ENCODE measurements at regions of chr18 and their contacts with region 1.

Region 1: DNA sequence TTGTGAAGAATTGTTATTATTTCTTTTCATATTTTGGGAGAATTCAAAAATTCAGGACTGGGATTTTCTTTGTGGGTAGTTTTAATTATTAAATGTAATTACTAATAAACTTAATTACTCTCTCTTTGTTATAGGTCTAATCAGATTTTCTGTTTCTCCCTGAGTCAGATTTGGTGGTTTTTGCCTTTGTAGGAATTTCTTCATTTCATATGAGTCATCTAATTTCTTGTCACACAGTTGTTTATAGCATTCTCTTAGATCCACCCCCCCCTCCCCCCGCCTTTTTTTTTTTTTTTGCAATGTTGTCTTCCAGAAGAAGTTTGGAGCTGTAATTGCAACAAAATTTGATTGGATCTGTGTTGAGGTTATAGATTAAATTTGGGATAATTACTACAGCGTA is 26.0 kb upstream of the GALR1 start:
- DNase-seq: no peak
- H3K4me3 Mint-ChIP-seq: no peak overlapping the region
- H3K27ac Mint-ChIP-seq: no peak overlapping the region
- H3K4me1 Mint-ChIP-seq: peaks cover 12% of the 10 kb centered on the region
- H3K27me3 Mint-ChIP-seq: peaks cover 11% of the 10 kb centered on the region

Region 2: GRCh38 chr18:77061946-77062517 is 161.6 kb before region 1 on chr18:
- intact Hi-C with region 1: loop called (anchors 2 kb)
- DNase-seq: peak; percentile 37
- H3K4me3 Mint-ChIP-seq: peak overlapping the region; percentile 76
- H3K27ac Mint-ChIP-seq: peak overlapping the region; percentile 97
- H3K4me1 Mint-ChIP-seq: peaks cover 85% of the 10 kb centered on the region
- H3K27me3 Mint-ChIP-seq: no peaks in the 10 kb centered on the region

Region 3: DNA sequence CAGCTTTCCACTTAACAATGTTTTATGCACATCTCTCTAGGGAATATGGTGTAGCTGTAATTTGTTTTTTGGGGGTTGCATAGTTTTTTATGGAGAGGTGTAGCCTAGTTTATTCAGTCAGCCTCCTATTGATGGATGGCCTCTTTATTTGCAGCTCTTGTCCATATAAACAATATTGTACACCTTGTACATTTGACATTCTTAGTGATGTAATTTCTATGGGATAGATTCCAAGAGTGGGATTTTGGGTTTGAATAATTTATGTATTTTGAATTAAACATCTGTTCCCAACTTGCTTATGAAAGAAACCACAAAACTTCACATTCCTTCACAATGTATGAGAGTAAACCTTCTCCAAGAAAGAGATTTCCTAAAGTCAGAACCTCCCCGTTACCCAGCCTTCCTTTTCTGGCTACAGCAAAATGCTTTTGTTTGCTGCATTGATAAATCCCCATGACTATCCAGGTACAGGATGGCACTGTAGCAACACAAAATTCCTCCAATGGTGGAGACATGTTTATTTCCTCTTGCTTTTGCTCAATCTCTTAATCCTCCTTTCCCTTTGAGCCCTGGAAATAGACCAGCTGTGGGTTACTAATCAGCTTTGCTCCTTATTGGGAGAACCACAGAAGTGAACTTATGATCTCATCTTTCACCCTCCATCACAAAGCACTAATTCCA is 32.4 kb before region 1 on chr18:
- intact Hi-C with region 1: no loop called
- DNase-seq: no peak
- H3K4me3 Mint-ChIP-seq: no peak overlapping the region
- H3K27ac Mint-ChIP-seq: no peak overlapping the region
- H3K4me1 Mint-ChIP-seq: no peaks in the 10 kb centered on the region
- H3K27me3 Mint-ChIP-seq: peaks cover 16% of the 10 kb centered on the region

Region 4: DNA sequence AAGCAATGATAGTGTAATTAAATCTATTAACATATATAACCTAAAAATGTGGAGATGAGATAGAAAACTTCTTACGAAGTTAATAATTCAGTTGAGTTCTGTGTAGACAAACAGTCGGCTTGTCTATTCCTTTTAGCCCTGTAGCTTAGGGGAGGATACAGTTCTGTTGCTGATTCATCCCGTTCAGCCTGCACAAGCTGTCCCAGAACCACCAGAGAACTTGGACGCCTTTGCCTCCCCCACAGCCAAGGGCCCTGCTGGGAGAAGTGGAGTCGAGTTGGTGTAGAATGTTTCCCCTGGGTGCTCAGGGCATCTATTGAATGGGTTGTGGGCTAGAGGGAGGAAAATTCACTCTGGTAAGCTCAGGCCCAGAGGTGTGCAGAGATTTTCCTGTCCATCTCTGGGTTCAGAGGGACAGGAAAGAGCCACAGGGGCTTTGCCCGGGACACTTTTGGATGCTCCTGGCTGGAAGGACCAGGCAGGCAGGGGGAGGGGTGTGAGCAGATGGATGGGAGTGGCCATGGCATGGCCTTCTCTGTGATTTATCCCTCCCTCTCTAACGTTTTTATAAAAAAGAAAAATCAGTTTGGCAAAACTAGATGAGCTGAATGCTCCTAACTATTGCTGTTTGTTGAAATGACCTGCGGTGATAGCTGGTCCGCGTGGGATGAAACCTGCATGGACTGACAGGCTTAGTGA is 16.8 kb before region 1 on chr18:
- intact Hi-C with region 1: no loop called
- DNase-seq: no peak
- H3K4me3 Mint-ChIP-seq: no peak overlapping the region
- H3K27ac Mint-ChIP-seq: no peak overlapping the region
- H3K4me1 Mint-ChIP-seq: peaks cover 43% of the 10 kb centered on the region
- H3K27me3 Mint-ChIP-seq: peaks cover 1% of the 10 kb centered on the region

Region 5: DNA sequence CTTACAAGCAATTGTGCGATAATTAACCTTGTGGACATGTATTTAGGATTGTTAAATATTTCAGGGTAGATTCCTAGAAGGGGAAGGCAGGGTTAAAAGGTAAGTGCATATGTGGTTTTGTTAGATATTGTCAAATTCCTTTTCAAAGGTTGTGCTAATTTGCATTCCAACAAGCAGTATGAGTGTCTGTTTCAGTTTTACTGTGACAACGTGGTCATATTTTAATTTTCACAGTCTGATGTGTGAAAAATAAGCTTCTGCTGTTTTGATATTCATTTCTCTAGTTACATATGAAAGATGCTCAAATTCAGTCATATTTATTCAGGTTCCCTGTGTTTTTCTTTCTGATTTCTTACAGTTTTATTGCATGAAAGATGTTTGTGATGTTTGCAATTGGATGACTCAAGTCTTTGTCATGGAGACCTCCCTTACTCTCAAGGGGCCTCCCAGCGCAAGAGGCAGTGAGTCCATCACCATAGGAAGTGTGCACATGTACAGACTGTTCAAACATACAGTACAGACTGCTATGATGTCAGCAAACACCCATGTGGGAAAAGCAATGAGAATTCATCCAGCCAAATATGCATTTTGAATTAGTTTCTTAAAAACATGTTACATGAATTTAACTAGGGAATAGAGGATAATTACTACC is 336.8 kb after region 1 on chr18:
- intact Hi-C with region 1: loop called (anchors 1 kb)
- DNase-seq: no peak
- H3K4me3 Mint-ChIP-seq: no peak overlapping the region
- H3K27ac Mint-ChIP-seq: no peak overlapping the region
- H3K4me1 Mint-ChIP-seq: no peaks in the 10 kb centered on the region
- H3K27me3 Mint-ChIP-seq: no peaks in the 10 kb centered on the region